HepG2 (cell line): ENCODE measurements at regions of chr22 and their contacts with region 1.

Region 1: DNA sequence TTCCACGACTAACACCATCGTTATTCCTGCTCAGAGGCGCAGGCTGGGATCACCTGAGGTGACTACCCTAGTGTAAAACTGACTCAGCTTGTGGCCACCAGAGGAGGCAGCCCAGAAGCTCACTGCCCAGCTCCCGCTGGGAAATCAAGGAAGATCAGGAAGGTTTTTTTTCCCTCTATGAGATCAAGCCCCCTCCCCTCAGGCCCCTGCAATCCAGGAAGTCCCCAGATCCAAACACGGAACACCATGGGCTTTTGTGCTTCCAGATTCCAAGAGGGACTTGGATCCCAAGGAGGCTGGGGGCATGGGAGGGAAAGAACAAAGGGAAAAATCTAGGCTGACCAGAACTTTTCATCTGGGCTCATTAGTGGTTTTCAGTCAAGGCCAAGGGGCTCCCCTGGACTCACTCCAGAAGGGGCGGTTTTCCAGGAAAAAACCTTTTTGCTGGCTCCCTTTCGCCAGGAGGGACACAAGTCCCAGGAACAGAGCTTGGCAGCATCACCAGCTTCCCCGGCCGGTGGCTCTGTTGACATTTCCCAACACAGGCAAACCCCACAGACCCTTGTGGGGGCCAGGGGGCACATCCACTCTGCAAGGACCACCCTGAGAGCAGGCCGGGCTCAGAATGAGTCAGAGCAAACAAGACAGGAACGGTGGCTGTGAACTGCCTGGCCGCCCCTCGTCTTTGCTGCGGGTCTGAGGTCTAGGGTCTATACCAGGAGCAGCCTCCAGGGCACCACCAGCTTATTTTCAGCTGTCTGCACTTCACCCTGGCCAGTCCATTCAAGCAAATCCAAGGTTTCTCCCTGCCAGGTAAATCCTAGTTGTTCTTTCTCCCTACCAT is 36.8 kb downstream of the MYH9 start:
- DNase-seq: peak; percentile 91
- ATAC-seq: peak; percentile 68
- H3K4me3 ChIP-seq: peak overlapping the region; percentile 9 to 66 (median 28)
- H3K27ac ChIP-seq: peak overlapping the region; percentile 94
- H3K4me1 ChIP-seq: peaks cover 93% of the 10 kb centered on the region
- H3K27me3 ChIP-seq: no peaks in the 10 kb centered on the region; a peak in 1 of 5 replicates
- CTCF ChIP-seq: peak; percentile 24; the same call in 1 of the 2 replicates
- EP300 ChIP-seq: peak; percentile 42 to 88; a peak in 3 of 4 replicates
- POLR2A ChIP-seq: no peak; a peak in 1 of 4 replicates
- RAD21 ChIP-seq: 0 out of 2 replicates have a peak, but pooled peaks have one; percentile 22

Region 2: GRCh38 chr22:36277482-36278291 is 73.3 kb before region 1 on chr22:
- CTCF ChIA-PET with region 1: no interaction called
- POLR2A ChIA-PET with region 1: no interaction called
- in situ Hi-C with region 1: no loop called
- intact Hi-C with region 1: no loop called
- DNase-seq: peak; percentile 61
- ATAC-seq: peak; percentile 78
- H3K4me3 ChIP-seq: no peak overlapping the region
- H3K27ac ChIP-seq: peak overlapping the region; percentile 78
- H3K4me1 ChIP-seq: peaks cover 47% of the 10 kb centered on the region
- H3K27me3 ChIP-seq: no peaks in the 10 kb centered on the region
- CTCF ChIP-seq: peak; percentile 82
- EP300 ChIP-seq: no peak
- POLR2A ChIP-seq: no peak
- RAD21 ChIP-seq: peak; percentile 70

Region 3: GRCh38 chr22:36365020-36365411 is 14.0 kb after region 1 on chr22:
- CTCF ChIA-PET with region 1: no interaction called
- POLR2A ChIA-PET with region 1: interaction called, 97 read pairs
- in situ Hi-C with region 1: no loop called
- intact Hi-C with region 1: loop called (anchors 2 kb)
- DNase-seq: no peak
- ATAC-seq: no peak
- H3K4me3 ChIP-seq: no peak overlapping the region
- H3K27ac ChIP-seq: peak overlapping the region; percentile 76
- H3K4me1 ChIP-seq: peaks cover 100% of the 10 kb centered on the region
- H3K27me3 ChIP-seq: no peaks in the 10 kb centered on the region
- CTCF ChIP-seq: no peak
- EP300 ChIP-seq: peak in 1 of 2 experiments; percentile 22; a peak in 1 of 4 replicates
- POLR2A ChIP-seq: no peak
- RAD21 ChIP-seq: no peak

Region 4: GRCh38 chr22:36409911-36410756 is 59.2 kb after region 1 on chr22:
- CTCF ChIA-PET with region 1: no interaction called
- POLR2A ChIA-PET with region 1: interaction called, 22 read pairs
- in situ Hi-C with region 1: no loop called
- intact Hi-C with region 1: loop called (anchors 5 kb)
- DNase-seq: peak; percentile 97
- ATAC-seq: peak; percentile 94
- H3K4me3 ChIP-seq: peak overlapping the region; percentile 56 to 72 (median 56)
- H3K27ac ChIP-seq: peak overlapping the region; percentile 90
- H3K4me1 ChIP-seq: peaks cover 74% of the 10 kb centered on the region
- H3K27me3 ChIP-seq: no peaks in the 10 kb centered on the region
- CTCF ChIP-seq: no peak
- EP300 ChIP-seq: no peak
- POLR2A ChIP-seq: peak; percentile 83 to 87
- RAD21 ChIP-seq: no peak

Region 5: GRCh38 chr22:36425977-36426523 is 75.1 kb after region 1 on chr22:
- CTCF ChIA-PET with region 1: no interaction called
- POLR2A ChIA-PET with region 1: interaction called, 32 read pairs
- in situ Hi-C with region 1: no loop called
- intact Hi-C with region 1: no loop called
- DNase-seq: peak; percentile 74
- ATAC-seq: peak; percentile 93
- H3K4me3 ChIP-seq: no peak overlapping the region
- H3K27ac ChIP-seq: peak overlapping the region; percentile 71
- H3K4me1 ChIP-seq: peaks cover 69% of the 10 kb centered on the region
- H3K27me3 ChIP-seq: no peaks in the 10 kb centered on the region
- CTCF ChIP-seq: peak; percentile 53
- EP300 ChIP-seq: no peak; a peak in 1 of 4 replicates
- POLR2A ChIP-seq: peak in 1 of 2 experiments; percentile 34; a peak in 1 of 4 replicates
- RAD21 ChIP-seq: no peak

Region 6: DNA sequence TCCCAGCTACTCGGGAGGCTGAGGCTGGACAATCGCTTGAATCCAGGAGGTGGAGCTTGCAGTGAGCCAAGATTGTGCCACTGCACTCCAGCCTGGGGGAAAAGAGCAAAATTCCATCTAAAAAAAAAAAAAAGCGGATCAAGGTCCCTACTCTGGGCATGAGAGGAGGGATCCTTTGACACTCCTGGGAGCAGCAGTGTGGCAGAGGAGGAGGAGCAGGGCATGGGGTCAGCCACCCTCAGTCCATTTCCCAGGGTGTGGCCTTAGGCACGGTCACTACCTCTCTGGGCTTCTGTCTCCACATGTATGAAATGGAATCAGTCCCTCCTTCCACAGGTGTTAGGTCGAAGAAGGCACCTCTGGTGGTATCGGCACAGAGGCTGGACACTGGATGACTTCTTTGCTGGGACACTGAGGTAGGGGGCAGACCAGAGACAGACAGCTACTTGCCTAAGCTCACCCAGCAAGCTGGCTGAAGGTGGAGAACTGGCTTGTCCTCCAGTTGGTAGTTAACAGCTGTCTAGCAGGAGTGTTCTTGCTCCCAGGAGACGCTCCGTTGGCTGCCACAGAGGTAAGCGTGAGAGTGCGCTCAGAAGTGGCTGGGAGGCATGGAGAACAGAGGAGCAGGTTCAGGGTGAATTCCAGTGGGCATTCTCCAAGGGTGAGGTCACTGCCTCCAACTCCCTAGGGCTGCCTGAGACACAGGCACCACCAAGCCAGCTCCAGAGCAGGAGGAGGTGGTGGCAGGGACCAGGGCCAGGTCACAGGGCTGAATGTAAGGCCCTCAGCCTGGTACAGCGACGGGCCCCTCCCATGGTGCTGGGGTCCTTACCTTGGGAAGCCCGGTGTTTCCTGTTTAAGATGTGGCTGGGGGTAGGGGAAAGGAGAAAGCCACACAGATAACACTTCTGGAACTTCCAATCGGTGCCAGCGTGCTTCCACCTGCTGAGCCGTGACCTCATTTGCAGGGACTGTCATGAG is 111.0 kb after region 1 on chr22:
- CTCF ChIA-PET with region 1: no interaction called
- POLR2A ChIA-PET with region 1: interaction called, 10 read pairs
- in situ Hi-C with region 1: no loop called
- intact Hi-C with region 1: no loop called
- DNase-seq: peak; percentile 63
- ATAC-seq: peak; percentile 74
- H3K4me3 ChIP-seq: peak overlapping the region in 1 of 3 experiments; percentile 46; a peak in 2 of 6 replicates
- H3K27ac ChIP-seq: no peak overlapping the region
- H3K4me1 ChIP-seq: peaks cover 54% of the 10 kb centered on the region
- H3K27me3 ChIP-seq: no peaks in the 10 kb centered on the region
- CTCF ChIP-seq: no peak
- EP300 ChIP-seq: no peak
- POLR2A ChIP-seq: 0 out of 4 replicates have a peak, but pooled peaks of 1 of the 2 experiments have one; percentile 23
- RAD21 ChIP-seq: no peak

Region 7: GRCh38 chr22:36577019-36577418 is 226.0 kb after region 1 on chr22:
- CTCF ChIA-PET with region 1: no interaction called
- POLR2A ChIA-PET with region 1: no interaction called
- in situ Hi-C with region 1: no loop called
- intact Hi-C with region 1: no loop called
- DNase-seq: peak; percentile 3
- ATAC-seq: no peak
- H3K4me3 ChIP-seq: no peak overlapping the region
- H3K27ac ChIP-seq: no peak overlapping the region
- H3K4me1 ChIP-seq: no peaks in the 10 kb centered on the region
- H3K27me3 ChIP-seq: peaks cover 11 to 43% of the 10 kb centered on the region in 2 experiments
- CTCF ChIP-seq: no peak
- EP300 ChIP-seq: no peak
- POLR2A ChIP-seq: no peak
- RAD21 ChIP-seq: no peak